ENCODE measurements at regions of chrX and their contacts with region 1.

Region 1: GRCh38 chrX:77910108-77910840 is at the start of gene ATP7A:
- DNase-seq: peak; percentile 60 to 96 (median 80)

Region 2: GRCh38 chrX:77446029-77446585 is 464.2 kb before region 1 on chrX:
- intact Hi-C with region 1: no loop called
- DNase-seq: peak in 3 of 10 donors; percentile 14 to 71 (median 66)

Region 3: DNA sequence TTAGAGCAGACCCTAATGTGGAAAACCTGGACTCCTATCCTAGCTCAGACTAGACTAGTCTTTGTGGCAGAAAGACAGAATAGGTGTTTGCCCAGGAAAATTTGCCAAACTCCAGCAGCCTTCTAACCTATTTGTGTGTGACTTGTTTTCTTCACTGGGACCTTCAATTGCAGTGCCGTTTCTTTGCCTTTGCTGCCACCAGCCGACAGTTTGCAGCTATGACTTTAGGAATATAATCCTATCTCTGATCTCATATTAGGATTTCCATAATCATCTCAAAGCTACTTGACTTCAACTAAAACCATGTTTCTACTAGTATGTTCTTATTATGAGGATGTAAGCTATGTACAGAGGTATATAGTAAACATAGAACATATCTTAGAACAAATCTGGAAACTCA is 119.4 kb after region 1 on chrX:
- intact Hi-C with region 1: loop called (anchors 10 kb)
- DNase-seq: peak in 7 of 10 donors; percentile 21 to 89 (median 31)

Region 4: DNA sequence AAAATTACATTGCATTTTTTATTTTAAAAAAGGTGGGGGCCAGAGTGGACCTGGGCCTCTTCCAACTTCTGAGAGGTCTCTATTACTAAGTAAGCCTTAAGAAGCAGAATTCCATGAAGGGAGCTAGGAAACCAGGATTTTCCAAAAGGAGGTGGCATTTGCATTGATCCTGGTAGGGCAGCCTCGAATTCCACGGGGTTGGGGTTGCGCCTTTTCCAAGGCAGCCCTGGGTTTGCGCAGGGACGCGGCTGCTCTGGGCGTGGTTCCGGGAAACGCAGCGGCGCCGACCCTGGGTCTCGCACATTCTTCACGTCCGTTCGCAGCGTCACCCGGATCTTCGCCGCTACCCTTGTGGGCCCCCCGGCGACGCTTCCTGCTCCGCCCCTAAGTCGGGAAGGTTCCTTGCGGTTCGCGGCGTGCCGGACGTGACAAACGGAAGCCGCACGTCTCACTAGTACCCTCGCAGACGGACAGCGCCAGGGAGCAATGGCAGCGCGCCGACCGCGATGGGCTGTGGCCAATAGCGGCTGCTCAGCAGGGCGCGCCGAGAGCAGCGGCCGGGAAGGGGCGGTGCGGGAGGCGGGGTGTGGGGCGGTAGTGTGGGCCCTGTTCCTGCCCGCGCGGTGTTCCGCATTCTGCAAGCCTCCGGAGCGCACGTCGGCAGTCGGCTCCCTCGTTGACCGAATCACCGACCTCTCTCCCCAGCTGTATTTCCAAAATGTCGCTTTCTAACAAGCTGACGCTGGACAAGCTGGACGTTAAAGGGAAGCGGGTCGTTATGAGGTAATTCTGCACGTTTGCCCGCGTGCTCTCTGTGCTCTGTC is 193.6 kb after region 1 on chrX and contains the start of gene PGK1:
- intact Hi-C with region 1: loop called (anchors 5 kb)
- DNase-seq: peak; percentile 90 to 99 (median 92)